Mammary epithelial cell (primary cell): ENCODE measurements at regions of chr22 and their contacts with region 1.

Region 1: GRCh38 chr22:31080848-31081649 is at the start of gene SMTN:
- DNase-seq: peak; percentile 90
- H3K4me3 ChIP-seq: peak within 1 kb of the TSS; percentile 79 to 91 (median 82)
- H3K27ac ChIP-seq: peak within 1 kb of the TSS; percentile 80
- H3K4me1 ChIP-seq: peaks cover 36% of the 10 kb centered on the region
- H3K27me3 ChIP-seq: no peaks in the 10 kb centered on the region
- CTCF ChIP-seq: no peak
- total RNA-seq, gene SMTN: 79.9 to 363 TPM

Region 2: DNA sequence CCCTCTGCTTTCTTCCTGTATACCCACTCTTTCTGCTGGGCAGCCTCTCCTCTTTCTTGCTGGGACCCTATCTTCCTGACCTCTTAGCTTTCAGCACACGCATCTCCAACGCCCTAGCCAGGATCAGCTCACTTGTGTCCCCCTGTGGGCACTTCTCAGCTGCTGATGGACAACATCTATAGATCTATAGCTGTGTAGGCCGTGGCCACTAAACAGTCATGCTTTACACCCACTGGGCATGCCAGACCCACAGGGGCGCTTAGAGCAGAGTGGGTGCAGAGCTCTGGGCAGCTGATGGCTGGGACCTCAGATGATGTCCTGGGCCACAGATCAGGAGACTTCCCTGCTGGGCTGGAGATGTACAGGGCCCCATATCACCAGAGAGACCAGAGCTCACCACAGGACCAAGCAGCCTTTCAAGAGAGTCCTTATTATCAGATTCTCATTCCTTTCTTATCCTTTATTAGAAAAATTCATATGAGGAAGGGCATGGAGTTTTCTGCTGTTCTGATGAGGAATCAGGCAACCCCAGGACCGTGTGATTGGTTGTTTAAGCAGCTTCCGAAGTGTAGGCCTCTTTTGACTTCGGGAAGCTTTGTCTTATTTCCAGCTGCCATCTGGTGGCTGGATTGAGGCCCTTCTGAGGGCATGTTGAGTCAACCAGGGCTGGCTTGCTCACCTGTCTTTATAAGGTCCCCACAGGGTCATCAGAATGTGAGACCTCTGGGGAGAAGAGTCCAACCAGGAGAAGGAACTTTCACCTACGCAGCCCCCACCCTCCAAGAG is 325.9 kb before region 1 on chr22:
- CTCF ChIA-PET with region 1: no interaction called
- dilution Hi-C with region 1: no loop called
- in situ Hi-C with region 1: loop called in 1 of 2 experiments (anchors 25 kb)
- intact Hi-C with region 1: no loop called
- DNase-seq: peak; percentile 65
- H3K4me3 ChIP-seq: no peak overlapping the region
- H3K27ac ChIP-seq: no peak overlapping the region
- H3K4me1 ChIP-seq: no peaks in the 10 kb centered on the region
- H3K27me3 ChIP-seq: no peaks in the 10 kb centered on the region
- CTCF ChIP-seq: peak; percentile 67 to 92

Region 3: GRCh38 chr22:30802202-30803166 is 278.6 kb before region 1 on chr22:
- CTCF ChIA-PET with region 1: no interaction called
- dilution Hi-C with region 1: no loop called
- in situ Hi-C with region 1: no loop called
- intact Hi-C with region 1: loop called (anchors 5 kb)
- DNase-seq: peak; percentile 95
- H3K4me3 ChIP-seq: peak overlapping the region; percentile 51 to 57 (median 55)
- H3K27ac ChIP-seq: no peak overlapping the region
- H3K4me1 ChIP-seq: peaks cover 33% of the 10 kb centered on the region
- H3K27me3 ChIP-seq: no peaks in the 10 kb centered on the region
- CTCF ChIP-seq: peak in 1 of 2 donors; percentile 38

Region 4: DNA sequence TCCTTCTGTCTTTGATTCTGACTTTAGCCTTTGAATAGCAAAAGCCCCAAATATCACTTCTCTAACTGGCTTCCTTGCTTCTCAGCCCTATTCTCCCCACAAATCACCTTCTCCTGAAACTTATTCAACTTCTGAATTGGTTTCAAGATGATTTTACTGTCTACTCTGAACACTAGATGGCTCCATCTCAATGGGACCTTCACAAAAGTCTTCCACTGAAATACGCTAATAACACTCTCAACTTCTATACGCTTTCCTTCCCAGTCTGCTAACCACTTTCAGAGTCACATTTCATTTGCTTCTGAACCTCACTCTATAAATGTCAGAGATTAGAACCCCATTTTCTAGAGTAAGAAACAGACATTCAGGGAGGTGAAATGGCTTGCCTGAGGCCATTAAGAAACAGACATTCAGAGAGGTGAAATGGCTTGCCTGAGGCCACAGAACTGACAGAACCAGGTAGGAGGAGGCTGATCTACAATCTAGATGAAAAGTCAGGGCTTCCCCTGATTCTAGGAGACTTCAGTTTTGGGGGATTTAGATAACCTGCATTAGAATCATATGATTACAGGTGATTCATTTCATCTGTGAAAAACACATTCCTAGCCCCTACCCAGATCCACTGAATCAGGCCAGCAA is 133.1 kb before region 1 on chr22:
- CTCF ChIA-PET with region 1: interaction called, 17 read pairs
- dilution Hi-C with region 1: no loop called
- in situ Hi-C with region 1: loop called (anchors 5 kb)
- intact Hi-C with region 1: loop called (anchors 1 kb)
- DNase-seq: peak; percentile 64
- H3K4me3 ChIP-seq: no peak overlapping the region
- H3K27ac ChIP-seq: peak overlapping the region; percentile 78
- H3K4me1 ChIP-seq: peaks cover 40% of the 10 kb centered on the region
- H3K27me3 ChIP-seq: no peaks in the 10 kb centered on the region
- CTCF ChIP-seq: peak; percentile 60 to 70

Region 5: GRCh38 chr22:30968924-30969539 is 112.0 kb before region 1 on chr22 and contains the start of gene TUG1:
- CTCF ChIA-PET with region 1: no interaction called
- dilution Hi-C with region 1: no loop called
- in situ Hi-C with region 1: no loop called
- intact Hi-C with region 1: loop called (anchors 1 kb)
- DNase-seq: peak; percentile 97
- H3K4me3 ChIP-seq: peak within 1 kb of the TSS; percentile 55 to 79 (median 65)
- H3K27ac ChIP-seq: peak within 1 kb of the TSS; percentile 73
- H3K4me1 ChIP-seq: peaks cover 15% of the 10 kb centered on the region
- H3K27me3 ChIP-seq: no peaks in the 10 kb centered on the region
- CTCF ChIP-seq: no peak
- total RNA-seq, gene TUG1: 63.3 to 68.0 TPM

Region 6: GRCh38 chr22:31036671-31037550 is 44.1 kb before region 1 on chr22:
- CTCF ChIA-PET with region 1: interaction called, 4 read pairs
- dilution Hi-C with region 1: loop called (anchors 5 kb)
- in situ Hi-C with region 1: no loop called
- intact Hi-C with region 1: loop called (anchors 10 kb)
- DNase-seq: peak; percentile 67
- H3K4me3 ChIP-seq: peak overlapping the region in 2 of 3 experiments; percentile 17 to 18
- H3K27ac ChIP-seq: no peak overlapping the region
- H3K4me1 ChIP-seq: peaks cover 11% of the 10 kb centered on the region
- H3K27me3 ChIP-seq: no peaks in the 10 kb centered on the region
- CTCF ChIP-seq: peak; percentile 12 to 46

Region 7: GRCh38 chr22:31055635-31056159 is 25.4 kb before region 1 on chr22:
- CTCF ChIA-PET with region 1: no interaction called
- dilution Hi-C with region 1: no loop called
- in situ Hi-C with region 1: no loop called
- intact Hi-C with region 1: loop called (anchors 1 kb)
- DNase-seq: peak; percentile 96
- H3K4me3 ChIP-seq: no peak overlapping the region
- H3K27ac ChIP-seq: peak overlapping the region; percentile 53
- H3K4me1 ChIP-seq: peaks cover 16% of the 10 kb centered on the region
- H3K27me3 ChIP-seq: no peaks in the 10 kb centered on the region
- CTCF ChIP-seq: no peak